ENCODE measurements at regions of chr13 and their contacts with region 1.

Region 1: GRCh38 chr13:30792285-30793000 is 57.1 kb downstream of the ALOX5AP start:
- DNase-seq: no peak
- ATAC-seq: no peak
- H3K4me3 Mint-ChIP-seq: no peak overlapping the region
- H3K27ac Mint-ChIP-seq: no peak overlapping the region
- H3K4me1 Mint-ChIP-seq: peaks cover 29% of the 10 kb centered on the region
- H3K27me3 Mint-ChIP-seq: no peaks in the 10 kb centered on the region

Region 2: GRCh38 chr13:30774214-30774730 is 18.2 kb before region 1 on chr13:
- CTCF ChIA-PET with region 1: interaction called, 8 read pairs
- POLR2A ChIA-PET with region 1: interaction called, 3 read pairs
- intact Hi-C with region 1: loop called in 1 of 2 experiments (anchors 1 kb)
- DNase-seq: peak; percentile 37
- ATAC-seq: peak; percentile 92
- H3K4me3 Mint-ChIP-seq: peak overlapping the region; percentile 24
- H3K27ac Mint-ChIP-seq: peak overlapping the region; percentile 70
- H3K4me1 Mint-ChIP-seq: peaks cover 20% of the 10 kb centered on the region
- H3K27me3 Mint-ChIP-seq: peaks cover under 1% of the 10 kb centered on the region

Region 3: DNA sequence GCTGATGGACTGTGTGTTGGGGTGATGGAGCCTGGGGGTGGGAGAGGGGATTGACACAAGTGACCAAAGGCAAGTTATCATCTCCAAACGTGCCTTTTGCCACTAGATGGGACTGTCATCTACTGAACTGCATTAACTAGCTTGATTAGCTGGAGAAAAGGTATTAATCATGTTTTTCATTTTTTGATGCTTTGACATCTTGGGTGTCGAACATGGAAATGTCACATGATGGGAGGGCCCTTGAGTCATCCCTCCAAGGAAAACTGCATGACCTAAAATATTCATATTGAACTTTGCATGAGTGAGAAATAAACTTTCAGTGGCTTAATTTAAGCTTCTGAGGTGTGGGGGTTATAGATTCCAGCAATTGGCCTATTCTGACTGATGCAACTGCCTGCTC is 16.1 kb after region 1 on chr13:
- CTCF ChIA-PET with region 1: interaction called, 13 read pairs
- POLR2A ChIA-PET with region 1: no interaction called
- intact Hi-C with region 1: no loop called
- DNase-seq: peak; percentile 31
- ATAC-seq: peak; percentile 84
- H3K4me3 Mint-ChIP-seq: no peak overlapping the region
- H3K27ac Mint-ChIP-seq: no peak overlapping the region
- H3K4me1 Mint-ChIP-seq: peaks cover 12% of the 10 kb centered on the region
- H3K27me3 Mint-ChIP-seq: no peaks in the 10 kb centered on the region

Region 4: GRCh38 chr13:30905932-30906383 is 113.5 kb after region 1 on chr13 and contains the start of gene MEDAG:
- CTCF ChIA-PET with region 1: no interaction called
- POLR2A ChIA-PET with region 1: no interaction called
- intact Hi-C with region 1: no loop called
- DNase-seq: no peak
- ATAC-seq: no peak
- H3K4me3 Mint-ChIP-seq: no peak within 1 kb of the TSS
- H3K27ac Mint-ChIP-seq: no peak within 1 kb of the TSS
- H3K4me1 Mint-ChIP-seq: peaks cover 7% of the 10 kb centered on the region
- H3K27me3 Mint-ChIP-seq: peaks cover 56% of the 10 kb centered on the region
- total RNA-seq, gene MEDAG: not detected

Region 5: DNA sequence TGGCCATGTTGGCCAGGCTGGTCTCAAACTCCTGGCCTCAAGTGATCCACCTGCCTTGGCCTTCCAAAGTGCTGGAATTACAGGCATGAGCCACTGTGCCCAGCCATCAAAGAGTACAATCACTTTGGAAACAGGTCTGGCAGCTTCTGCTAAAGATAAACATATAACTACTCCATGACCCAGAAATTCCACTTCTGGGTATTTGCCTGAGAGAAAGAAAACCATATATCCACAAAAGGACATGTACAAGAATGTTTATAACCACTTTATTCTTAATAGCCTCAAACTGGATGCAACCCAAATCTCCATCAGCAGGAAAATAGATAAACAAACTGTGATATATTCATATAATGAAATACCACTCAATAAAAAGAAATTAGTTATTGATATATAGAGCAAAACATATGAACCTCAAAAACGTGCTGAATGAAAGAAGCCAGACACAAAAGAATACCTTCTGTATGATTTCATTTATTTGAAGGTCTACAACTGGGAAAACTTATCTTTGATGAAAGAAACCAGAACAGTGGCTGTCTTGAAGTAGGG is 180.5 kb after region 1 on chr13:
- CTCF ChIA-PET with region 1: no interaction called
- POLR2A ChIA-PET with region 1: no interaction called
- intact Hi-C with region 1: no loop called
- DNase-seq: no peak
- ATAC-seq: no peak
- H3K4me3 Mint-ChIP-seq: no peak overlapping the region
- H3K27ac Mint-ChIP-seq: no peak overlapping the region
- H3K4me1 Mint-ChIP-seq: no peaks in the 10 kb centered on the region
- H3K27me3 Mint-ChIP-seq: peaks cover 28% of the 10 kb centered on the region